ENCODE measurements at regions of chr11 and their contacts with region 1.

Region 1: DNA sequence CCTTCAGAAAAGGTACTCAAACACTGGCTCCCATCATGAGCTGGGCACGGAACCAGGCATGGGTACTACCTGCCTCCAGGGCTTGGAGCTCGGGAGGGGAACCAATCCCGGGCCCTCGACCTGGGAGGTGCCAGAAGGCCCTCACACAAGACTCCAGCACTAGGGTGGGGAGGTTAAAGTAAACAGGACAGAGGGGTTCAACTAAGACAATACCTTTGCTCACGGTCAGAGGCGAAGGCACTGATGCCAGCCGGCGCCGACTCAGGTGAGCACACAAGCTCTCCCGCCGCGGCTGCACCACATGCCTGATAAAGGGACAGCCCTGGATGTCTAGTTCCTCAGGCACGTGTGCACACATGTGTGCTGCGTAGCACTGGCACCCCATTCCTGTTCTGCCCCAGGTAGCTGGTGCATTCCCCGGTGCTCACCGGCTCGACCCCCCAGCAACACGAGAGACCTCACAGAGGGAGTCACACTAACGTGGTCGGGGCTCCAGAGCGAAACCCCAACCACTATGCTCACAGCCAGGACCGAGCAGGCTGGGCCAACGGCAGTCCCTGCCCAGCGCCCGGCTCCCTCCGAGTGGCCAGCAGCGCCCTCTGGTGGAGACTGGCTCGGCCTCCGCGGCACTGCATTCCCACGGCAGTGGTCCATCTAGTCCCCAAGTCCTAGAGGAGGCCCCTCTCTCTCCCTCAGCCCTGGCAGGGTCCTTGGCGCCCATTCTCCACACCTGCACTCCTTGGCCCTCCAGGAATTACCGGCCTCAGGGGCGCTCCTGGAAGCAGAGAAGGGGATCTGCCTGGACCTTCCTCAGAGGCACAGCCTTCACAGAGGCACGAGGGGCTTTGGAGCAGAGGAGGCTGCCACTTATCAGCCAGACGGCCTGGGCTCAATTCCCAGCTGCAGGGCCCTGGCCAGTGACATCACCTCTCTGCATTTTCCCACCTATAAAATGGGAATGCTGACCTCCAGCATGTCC is 28.8 kb upstream of the MOB2 start:
- DNase-seq: peak; percentile 13
- H3K4me3 ChIP-seq: no peak overlapping the region
- H3K27ac ChIP-seq: no peak overlapping the region
- H3K27me3 ChIP-seq: no peaks in the 10 kb centered on the region
- CTCF ChIP-seq: peak; percentile 91

Region 2: DNA sequence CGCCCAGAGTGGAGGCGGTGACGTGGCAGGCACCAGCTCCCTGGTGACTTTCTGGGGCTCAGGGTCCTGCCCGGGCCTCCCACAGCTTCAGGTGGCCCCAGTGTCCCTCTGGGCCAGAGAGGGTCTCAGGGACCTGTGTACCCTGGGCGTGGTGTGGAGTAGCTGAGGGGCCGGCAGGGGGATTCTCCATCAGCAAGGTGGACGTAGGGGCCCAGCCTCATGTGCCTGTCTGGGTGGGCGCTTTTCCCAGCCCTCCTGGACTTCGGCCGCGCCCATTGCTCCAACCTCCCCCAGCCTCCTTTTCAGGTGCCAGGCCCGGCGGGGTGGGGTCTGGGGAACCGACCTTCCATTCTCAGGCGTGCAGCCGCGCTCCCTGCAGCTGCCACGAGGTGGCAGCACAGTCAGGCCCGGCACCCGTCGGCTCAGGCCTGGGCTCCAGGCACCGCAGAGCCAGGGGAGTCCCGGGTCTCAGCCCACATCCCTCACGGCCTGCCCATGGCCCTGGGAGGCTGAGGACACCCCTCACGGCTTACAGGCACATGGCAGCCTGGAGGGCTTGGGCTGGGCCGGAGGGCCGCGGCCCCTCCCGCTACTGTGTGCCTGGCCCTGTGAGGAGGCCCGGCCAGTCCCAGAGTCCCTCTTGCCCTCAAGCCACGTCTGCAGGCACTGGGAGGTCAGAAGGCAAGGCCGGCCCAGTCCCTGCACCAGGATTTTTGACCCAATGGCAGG is 312.4 kb before region 1 on chr11:
- CTCF ChIA-PET with region 1: interaction called, 18 read pairs
- POLR2A ChIA-PET with region 1: no interaction called
- DNase-seq: no peak
- H3K4me3 ChIP-seq: no peak overlapping the region
- H3K27ac ChIP-seq: no peak overlapping the region
- H3K27me3 ChIP-seq: peaks cover 12% of the 10 kb centered on the region
- CTCF ChIP-seq: peak; percentile 85

Region 3: DNA sequence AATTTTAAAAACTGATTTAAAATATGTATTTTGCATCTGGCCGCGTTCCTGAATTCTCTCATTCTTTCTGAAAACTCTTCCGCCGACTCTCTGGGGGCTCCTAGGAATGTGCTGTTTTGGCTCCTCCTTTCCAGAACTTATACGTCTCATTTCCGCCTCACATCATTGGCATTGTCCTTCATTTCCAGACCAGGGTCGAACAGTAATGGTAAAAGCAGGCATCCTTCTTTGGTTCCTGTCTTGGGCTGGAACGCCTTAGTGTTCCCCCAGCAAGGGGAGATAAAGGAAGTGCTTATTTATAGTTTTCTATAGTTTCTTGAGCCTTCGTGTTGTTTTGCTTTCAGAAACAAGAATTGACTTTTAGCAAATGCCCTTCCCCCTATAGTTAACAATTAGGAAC is 393.2 kb after region 1 on chr11:
- CTCF ChIA-PET with region 1: no interaction called
- POLR2A ChIA-PET with region 1: no interaction called
- DNase-seq: no peak
- H3K4me3 ChIP-seq: no peak overlapping the region
- H3K27ac ChIP-seq: no peak overlapping the region
- H3K27me3 ChIP-seq: peaks cover 14% of the 10 kb centered on the region
- CTCF ChIP-seq: no peak

Measured in AG04450 (cell line).